A549 (cell line): ENCODE measurements at regions of chr22 and their contacts with region 1.

Region 1: GRCh38 chr22:38766076-38766777 is 10.4 kb upstream of the SUN2 start:
- DNase-seq: peak; percentile 82 to 90
- ATAC-seq: peak; percentile 90 to 91
- H3K4me3 ChIP-seq: no peak overlapping the region
- H3K27ac ChIP-seq: peak overlapping the region; percentile 17 to 76; a peak in 4 of 6 replicates
- H3K4me1 ChIP-seq: peaks cover 29% of the 10 kb centered on the region
- CTCF ChIP-seq: peak; percentile 71
- EP300 ChIP-seq: no peak
- POLR2A ChIP-seq: no peak
- RAD21 ChIP-seq: peak; percentile 52

Region 2: DNA sequence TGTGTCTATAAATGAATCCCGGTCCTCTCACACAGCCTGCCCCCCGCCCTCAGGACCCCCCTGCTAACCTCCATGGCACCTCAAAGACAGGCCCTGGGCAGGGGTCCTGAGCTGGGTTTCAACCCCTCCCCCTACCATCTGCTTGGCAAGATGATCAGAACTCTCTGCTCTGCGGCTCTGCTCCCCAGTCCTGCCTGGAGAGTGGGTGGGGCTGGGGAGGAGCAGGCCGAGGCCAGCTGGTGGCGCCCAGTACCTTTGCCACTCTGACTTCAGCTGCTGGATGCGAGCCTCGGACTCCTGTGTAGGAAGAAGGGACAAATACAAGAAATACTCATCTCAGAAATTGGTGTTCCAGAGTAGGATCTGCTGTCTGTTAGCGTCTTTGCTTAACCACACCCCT is 25.5 kb before region 1 on chr22:
- CTCF ChIA-PET with region 1: interaction called, 10 read pairs
- POLR2A ChIA-PET with region 1: no interaction called
- DNase-seq: no peak
- ATAC-seq: peak in 1 of 2 experiments; percentile 27; a peak in 1 of 6 replicates
- H3K4me3 ChIP-seq: no peak overlapping the region
- H3K27ac ChIP-seq: no peak overlapping the region
- H3K4me1 ChIP-seq: no peaks in the 10 kb centered on the region
- CTCF ChIP-seq: no peak
- EP300 ChIP-seq: no peak
- POLR2A ChIP-seq: no peak
- RAD21 ChIP-seq: peak in 1 of 2 experiments; percentile 10; a peak in 1 of 5 replicates

Region 3: GRCh38 chr22:38782402-38783094 is 16.3 kb after region 1 on chr22:
- CTCF ChIA-PET with region 1: interaction called, 45 read pairs
- POLR2A ChIA-PET with region 1: no interaction called
- DNase-seq: no peak
- ATAC-seq: no peak
- H3K4me3 ChIP-seq: no peak overlapping the region
- H3K27ac ChIP-seq: no peak overlapping the region
- H3K4me1 ChIP-seq: no peaks in the 10 kb centered on the region
- CTCF ChIP-seq: no peak
- EP300 ChIP-seq: no peak
- POLR2A ChIP-seq: no peak
- RAD21 ChIP-seq: no peak

Region 4: DNA sequence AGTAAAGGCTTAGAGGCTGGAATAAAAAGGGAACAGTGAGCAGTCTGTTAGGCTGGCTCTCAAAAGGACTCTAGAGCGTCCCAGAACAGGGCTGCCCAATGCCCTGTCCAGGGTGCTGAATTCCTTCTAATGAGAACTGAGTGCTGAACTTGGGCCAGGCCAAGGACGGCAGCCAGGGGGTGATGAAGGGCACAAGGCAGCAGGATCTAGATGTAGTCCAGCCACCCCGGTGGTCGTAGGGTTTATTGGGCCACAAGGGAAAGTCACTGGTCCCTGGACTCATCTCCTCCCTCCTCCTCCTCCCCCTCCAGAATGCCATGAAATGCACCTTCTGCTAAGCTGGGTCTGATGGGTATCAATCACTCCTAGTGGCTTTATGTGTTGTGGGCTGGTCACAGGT is 58.4 kb after region 1 on chr22:
- CTCF ChIA-PET with region 1: interaction called, 47 read pairs
- POLR2A ChIA-PET with region 1: no interaction called
- DNase-seq: peak; percentile 31 to 49
- ATAC-seq: peak; percentile 87
- H3K4me3 ChIP-seq: no peak overlapping the region
- H3K27ac ChIP-seq: no peak overlapping the region
- H3K4me1 ChIP-seq: peaks cover 11% of the 10 kb centered on the region
- CTCF ChIP-seq: no peak
- EP300 ChIP-seq: no peak
- POLR2A ChIP-seq: no peak
- RAD21 ChIP-seq: no peak

Region 5: DNA sequence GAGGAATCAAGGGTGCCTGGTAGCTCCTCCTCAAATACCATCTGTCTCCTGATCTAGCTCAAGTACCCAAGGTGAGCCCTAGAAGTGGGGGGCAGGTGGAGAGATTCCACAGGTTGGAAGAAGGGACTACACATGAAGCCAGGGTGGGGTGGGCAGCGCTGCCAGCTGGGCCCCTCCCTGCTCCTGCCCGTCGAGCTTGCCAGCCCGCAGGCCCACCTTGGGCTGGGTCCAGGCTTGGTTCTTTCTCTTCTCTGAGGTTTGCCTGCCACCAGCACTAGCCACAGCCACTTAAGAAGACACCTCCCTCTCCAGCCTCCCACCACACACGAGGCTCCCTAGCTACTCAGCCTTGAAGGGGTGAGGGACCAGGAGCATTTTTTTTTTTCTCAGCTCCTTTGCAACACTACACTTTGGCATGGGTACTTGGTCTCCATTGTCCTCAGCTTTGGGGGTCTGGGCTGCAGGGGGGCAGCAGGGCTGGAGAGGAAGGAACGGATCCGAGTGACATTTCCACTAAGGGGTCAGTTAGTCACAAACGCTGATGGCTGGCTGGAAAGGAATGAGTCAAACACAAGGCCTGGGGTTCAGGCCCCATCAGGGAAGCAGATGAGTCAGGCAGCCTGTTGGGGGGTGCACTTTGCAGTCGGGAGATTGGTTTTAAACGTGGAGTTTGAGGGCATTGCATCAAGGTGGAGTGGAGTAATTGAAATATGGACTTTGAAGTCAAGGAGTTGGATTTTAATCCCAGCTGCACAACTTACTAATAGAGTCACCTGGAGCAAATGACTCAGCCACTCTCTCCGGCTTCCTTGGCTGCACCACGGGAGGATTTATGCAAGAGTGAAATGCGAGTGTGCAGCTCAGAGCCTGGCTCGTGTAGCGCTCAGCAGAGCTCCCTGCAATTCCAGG is 85.0 kb after region 1 on chr22:
- CTCF ChIA-PET with region 1: interaction called, 37 read pairs
- POLR2A ChIA-PET with region 1: no interaction called
- DNase-seq: peak; percentile 36 to 59
- ATAC-seq: peak; percentile 79 to 87
- H3K4me3 ChIP-seq: no peak overlapping the region
- H3K27ac ChIP-seq: peak overlapping the region; percentile 56 to 82; a peak in 5 of 6 replicates
- H3K4me1 ChIP-seq: peaks cover 18% of the 10 kb centered on the region
- CTCF ChIP-seq: no peak
- EP300 ChIP-seq: no peak
- POLR2A ChIP-seq: no peak
- RAD21 ChIP-seq: no peak

Region 6: GRCh38 chr22:38879108-38879729 is 113.0 kb after region 1 on chr22:
- CTCF ChIA-PET with region 1: interaction called, 112 read pairs
- POLR2A ChIA-PET with region 1: no interaction called
- DNase-seq: no peak
- ATAC-seq: no peak
- H3K4me3 ChIP-seq: no peak overlapping the region
- H3K27ac ChIP-seq: no peak overlapping the region
- H3K4me1 ChIP-seq: 0 out of 3 replicates have a peak, but pooled peaks cover 2% of the 10 kb centered on the region
- CTCF ChIP-seq: no peak
- EP300 ChIP-seq: no peak
- POLR2A ChIP-seq: no peak
- RAD21 ChIP-seq: no peak